Esophagus muscularis mucosa (tissue), 4 donors: ENCODE measurements at regions of chr5 and their contacts with region 1.

Region 1: DNA sequence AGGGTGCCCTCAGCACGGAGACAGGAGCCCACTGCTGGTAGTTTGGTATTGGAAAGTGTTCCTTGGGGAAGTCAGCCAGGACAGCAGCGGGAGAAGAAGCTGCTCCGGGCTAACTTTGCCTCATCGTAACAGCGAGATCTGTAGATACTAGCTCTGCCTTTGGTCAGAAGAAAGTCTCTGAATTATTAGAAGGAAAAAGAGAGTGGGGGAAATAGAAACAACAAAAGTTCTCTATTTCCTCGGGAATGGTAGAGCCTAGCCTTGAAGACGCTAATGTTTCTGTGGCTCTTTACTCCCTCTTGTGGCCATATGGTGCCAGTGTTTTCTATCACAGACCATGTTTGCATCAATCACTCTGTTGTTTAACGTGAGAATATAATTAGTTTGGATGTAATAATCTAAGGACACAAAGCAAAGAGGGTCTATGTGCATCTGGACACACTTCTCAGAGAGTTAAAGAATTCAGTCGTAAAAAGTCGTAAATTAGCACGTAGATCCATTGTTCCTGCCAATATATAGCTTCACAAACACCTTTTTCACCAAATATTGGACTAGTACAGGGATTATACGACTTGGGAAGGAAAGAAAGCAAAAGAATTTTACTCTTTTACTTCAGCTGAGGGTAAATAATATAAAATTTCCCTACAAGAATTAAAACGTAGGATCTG is 40.2 kb upstream of the HSD17B4 start:
- DNase-seq: no peak
- H3K4me3 ChIP-seq: peak overlapping the region; percentile 51 to 66 (median 58)
- H3K27ac ChIP-seq: peak overlapping the region; percentile 74 to 83 (median 79)
- H3K4me1 ChIP-seq: peaks cover 8 to 23% (median 20%) of the 10 kb centered on the region in 4 donors
- H3K27me3 ChIP-seq: no peaks in the 10 kb centered on the region
- CTCF ChIP-seq: peak; percentile 88 to 97 (median 89)
- EP300 ChIP-seq: no peak
- POLR2A ChIP-seq: no peak

Region 2: GRCh38 chr5:118987988-118988865 is 423.8 kb before region 1 on chr5 and contains the start of gene DTWD2:
- intact Hi-C with region 1: loop called (anchors 5 kb)
- DNase-seq: peak; percentile 97
- H3K4me3 ChIP-seq: peak within 1 kb of the TSS; percentile 71 to 98 (median 79)
- H3K27ac ChIP-seq: peak within 1 kb of the TSS; percentile 87 to 97 (median 94)
- H3K4me1 ChIP-seq: peaks cover 0 to 19% (median 19%) of the 10 kb centered on the region in 4 donors
- H3K27me3 ChIP-seq: no peaks in the 10 kb centered on the region
- CTCF ChIP-seq: peak; percentile 72 to 90 (median 75)
- EP300 ChIP-seq: no peak
- POLR2A ChIP-seq: no peak
- total RNA-seq, gene DTWD2: 7.1 to 10.5 (median 9.1) TPM

Region 3: DNA sequence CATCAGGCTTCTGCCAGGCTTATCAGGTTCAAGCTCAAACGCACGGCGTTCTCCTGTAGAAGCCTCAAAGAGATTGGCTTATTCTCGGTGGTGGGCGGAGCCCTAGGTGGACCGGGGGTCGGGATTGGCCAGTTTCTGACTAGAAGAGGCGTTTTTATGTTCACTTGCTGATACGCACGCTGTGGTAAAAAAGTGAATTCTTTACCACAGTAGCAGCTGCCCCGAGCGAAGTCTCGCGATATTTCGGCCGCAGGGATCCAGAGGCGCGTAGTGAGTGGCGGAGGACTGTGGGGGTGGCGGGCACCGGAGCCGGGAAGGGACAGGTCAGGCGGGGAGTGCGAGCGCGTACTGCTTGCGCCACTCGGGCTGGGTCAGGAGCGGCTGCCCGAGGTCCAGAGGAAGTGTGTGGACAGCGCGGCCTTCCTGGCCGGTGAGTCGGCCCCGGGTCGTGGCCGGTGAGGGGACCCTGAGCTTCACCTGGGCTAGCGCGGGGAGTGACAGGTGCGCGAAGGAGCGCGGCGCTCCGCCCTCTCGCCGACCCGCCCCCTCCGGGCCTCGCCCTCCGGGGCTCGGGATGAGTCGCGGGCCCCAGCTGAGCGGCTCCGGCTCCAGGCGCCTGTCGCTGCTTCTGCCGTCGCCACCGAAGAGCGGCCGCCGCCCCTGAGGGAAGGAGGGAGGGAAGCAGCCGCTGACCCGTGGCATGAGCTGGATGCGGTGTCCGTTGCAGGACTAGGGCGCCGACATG is 341.1 kb before region 1 on chr5 and contains the start of gene DMXL1:
- intact Hi-C with region 1: loop called (anchors 10 kb)
- DNase-seq: peak; percentile 100
- H3K4me3 ChIP-seq: peak within 1 kb of the TSS; percentile 84 to 97 (median 95)
- H3K27ac ChIP-seq: peak within 1 kb of the TSS; percentile 96 to 99 (median 98)
- H3K4me1 ChIP-seq: peaks cover 21 to 46% (median 35%) of the 10 kb centered on the region in 4 donors
- H3K27me3 ChIP-seq: no peaks in the 10 kb centered on the region
- CTCF ChIP-seq: no peak
- EP300 ChIP-seq: no peak
- POLR2A ChIP-seq: peak; percentile 78
- total RNA-seq, gene DMXL1: 36.3 to 65.6 (median 39.9) TPM

Region 4: GRCh38 chr5:119161430-119161829 is 250.6 kb before region 1 on chr5:
- intact Hi-C with region 1: no loop called
- DNase-seq: no peak
- H3K4me3 ChIP-seq: no peak overlapping the region
- H3K27ac ChIP-seq: no peak overlapping the region
- H3K4me1 ChIP-seq: no peaks in the 10 kb centered on the region
- H3K27me3 ChIP-seq: no peaks in the 10 kb centered on the region
- CTCF ChIP-seq: no peak
- EP300 ChIP-seq: no peak
- POLR2A ChIP-seq: no peak

Region 5: DNA sequence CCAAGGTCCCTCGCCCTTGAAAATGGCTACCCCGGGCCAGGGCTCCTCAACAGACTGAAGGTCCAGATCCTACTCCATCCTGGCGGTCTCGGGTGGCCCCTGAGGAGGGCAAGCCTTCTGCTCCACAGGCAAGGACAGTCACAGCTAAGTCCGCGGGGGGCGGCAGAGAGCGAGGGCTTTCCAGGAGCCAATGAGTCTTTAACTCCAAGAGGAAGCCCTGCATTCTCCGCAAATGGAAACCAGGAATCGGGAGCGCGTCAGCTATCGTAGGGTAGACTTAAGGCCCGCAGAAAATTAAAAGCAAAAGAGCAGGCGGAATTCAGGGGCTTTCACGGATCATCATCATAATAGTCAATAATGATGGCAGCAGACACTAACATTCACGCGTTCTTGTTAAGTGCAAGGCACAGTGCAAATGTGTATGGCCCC is 144.1 kb before region 1 on chr5:
- intact Hi-C with region 1: loop called (anchors 5 kb)
- DNase-seq: peak; percentile 99
- H3K4me3 ChIP-seq: peak overlapping the region; percentile 61 to 88 (median 79)
- H3K27ac ChIP-seq: peak overlapping the region; percentile 87 to 95 (median 90)
- H3K4me1 ChIP-seq: peaks cover 15 to 34% (median 33%) of the 10 kb centered on the region in 4 donors
- H3K27me3 ChIP-seq: no peaks in the 10 kb centered on the region
- CTCF ChIP-seq: peak in 1 of 3 experiments; percentile 44
- EP300 ChIP-seq: no peak
- POLR2A ChIP-seq: no peak

Region 6: DNA sequence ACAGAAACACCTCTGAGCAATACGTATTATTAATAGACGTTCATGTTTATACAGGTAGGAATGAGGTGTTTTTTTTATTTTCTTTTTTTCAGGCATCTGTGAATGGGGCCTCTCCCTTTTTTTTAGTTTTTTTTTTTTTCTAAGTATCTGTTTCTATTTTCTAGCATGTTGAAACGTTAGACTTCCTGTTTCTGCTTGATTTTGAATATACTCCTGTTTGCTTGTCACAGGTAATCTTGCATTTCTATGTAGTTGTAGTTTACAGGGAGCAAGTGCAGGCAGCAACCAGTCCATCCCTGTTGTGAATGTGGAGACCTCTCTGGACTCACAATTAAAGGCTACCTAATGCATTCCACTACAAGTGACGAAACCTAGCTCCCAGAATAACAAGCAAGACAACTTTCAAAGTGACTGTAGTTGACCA is 79.1 kb before region 1 on chr5:
- intact Hi-C with region 1: loop called (anchors 5 kb)
- DNase-seq: no peak
- H3K4me3 ChIP-seq: no peak overlapping the region
- H3K27ac ChIP-seq: no peak overlapping the region
- H3K4me1 ChIP-seq: peaks cover 23 to 48% (median 41%) of the 10 kb centered on the region in 4 donors
- H3K27me3 ChIP-seq: no peaks in the 10 kb centered on the region
- CTCF ChIP-seq: no peak
- EP300 ChIP-seq: no peak
- POLR2A ChIP-seq: no peak

Region 7: DNA sequence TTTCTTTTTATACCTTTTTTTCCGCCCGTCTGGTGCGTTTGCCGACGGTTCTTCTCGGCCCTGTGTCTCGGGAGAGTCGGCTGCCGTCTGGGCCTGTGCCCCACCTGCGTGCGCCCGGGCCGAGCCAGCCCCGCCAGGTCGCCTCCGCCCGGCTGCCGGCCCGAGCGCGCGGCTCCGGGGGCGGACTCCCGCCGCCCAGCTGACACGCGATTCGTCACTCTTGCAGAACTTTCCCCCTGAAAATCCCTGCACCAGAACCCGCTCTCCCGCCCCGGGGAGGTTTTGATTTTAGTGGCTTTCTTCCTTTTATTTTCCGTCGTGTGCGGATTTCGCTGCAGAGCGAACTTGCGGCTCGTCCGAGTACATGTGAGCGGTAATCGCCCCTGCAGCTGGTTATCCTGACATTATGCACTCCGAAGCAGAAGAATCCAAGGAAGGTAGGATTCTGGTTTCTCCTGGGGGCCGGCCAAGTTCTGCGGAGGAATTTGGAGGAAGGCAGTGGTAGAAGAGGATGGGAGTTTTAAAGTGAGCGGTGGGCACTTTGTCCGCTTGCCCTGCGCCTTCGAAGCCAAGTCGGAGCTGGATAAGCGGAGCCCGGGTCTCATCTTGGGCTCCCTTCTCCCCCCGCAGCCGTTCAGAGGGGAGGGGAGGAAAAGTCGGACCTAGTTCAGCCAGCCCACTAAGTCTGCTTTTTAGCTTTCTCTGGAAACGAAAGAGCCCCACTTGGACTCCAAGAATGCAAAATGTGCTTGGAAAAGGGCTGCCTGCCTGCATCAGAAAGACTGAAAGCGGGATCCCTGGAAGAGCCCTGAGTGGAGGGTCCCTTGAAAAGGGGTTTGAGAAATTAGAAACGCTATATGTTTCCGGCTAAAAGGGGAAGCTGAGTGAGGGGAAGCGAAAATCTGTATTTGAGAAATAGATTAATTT is 56.1 kb before region 1 on chr5 and contains the start of gene TNFAIP8:
- intact Hi-C with region 1: loop called (anchors 5 kb)
- DNase-seq: no peak
- H3K4me3 ChIP-seq: peak within 1 kb of the TSS; percentile 59 to 82 (median 74)
- H3K27ac ChIP-seq: peak within 1 kb of the TSS; percentile 76 to 89 (median 82)
- H3K4me1 ChIP-seq: peaks cover 15 to 58% (median 53%) of the 10 kb centered on the region in 4 donors
- H3K27me3 ChIP-seq: no peaks in the 10 kb centered on the region
- CTCF ChIP-seq: no peak
- EP300 ChIP-seq: no peak
- POLR2A ChIP-seq: no peak
- total RNA-seq, gene TNFAIP8: 20.2 to 26.2 (median 22.5) TPM

Region 8: DNA sequence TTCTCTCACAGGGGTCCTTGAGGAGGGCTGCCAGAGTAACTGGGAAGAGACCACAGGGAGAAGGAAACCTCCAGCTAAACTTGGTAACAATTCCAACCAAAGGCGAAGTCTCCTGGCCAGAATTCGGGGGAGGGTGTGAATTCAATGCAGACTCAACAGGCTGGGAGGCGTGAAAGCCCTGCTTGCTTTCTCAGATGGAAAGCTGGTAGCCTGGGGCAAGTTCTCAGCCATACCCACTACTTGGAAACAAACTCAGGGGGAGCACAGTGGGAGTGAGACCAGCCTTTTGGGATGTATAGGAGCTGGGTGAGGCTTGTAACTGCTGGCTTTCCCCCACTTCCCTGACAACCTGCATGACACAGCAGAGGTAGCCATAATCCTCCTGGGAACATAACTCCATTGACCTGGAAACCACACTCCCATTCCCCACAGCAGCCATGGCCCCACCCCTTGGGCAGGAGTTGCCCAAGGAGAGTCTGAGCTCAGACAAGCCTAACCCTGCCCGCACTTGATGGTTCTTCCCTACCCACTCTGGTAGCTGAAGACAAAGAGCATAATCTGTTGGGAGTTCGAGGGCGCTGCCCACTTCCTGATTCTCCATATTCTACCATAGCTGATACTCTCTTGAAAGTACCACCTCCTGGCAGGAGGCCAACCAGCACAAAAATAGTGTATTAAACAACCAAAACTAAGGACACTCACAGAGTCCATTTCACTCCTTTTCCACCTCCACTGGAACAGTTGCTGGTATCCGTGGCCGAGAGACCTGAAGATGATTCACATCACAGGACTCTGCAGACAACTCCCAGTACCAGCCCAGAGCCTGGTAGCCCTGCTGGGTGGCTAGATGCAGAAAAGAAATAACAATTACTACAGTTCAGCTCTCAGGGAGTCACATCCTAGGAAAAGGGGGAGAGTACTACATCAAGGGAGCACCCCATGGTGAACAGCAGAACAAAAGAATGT is 341.1 kb after region 1 on chr5:
- intact Hi-C with region 1: no loop called
- DNase-seq: no peak
- H3K4me3 ChIP-seq: no peak overlapping the region
- H3K27ac ChIP-seq: no peak overlapping the region
- H3K4me1 ChIP-seq: no peaks in the 10 kb centered on the region
- H3K27me3 ChIP-seq: no peaks in the 10 kb centered on the region
- CTCF ChIP-seq: no peak
- EP300 ChIP-seq: no peak
- POLR2A ChIP-seq: no peak